Vagina (tissue), 2 donors: ENCODE measurements at regions of chr2 and their contacts with region 1.

Region 1: DNA sequence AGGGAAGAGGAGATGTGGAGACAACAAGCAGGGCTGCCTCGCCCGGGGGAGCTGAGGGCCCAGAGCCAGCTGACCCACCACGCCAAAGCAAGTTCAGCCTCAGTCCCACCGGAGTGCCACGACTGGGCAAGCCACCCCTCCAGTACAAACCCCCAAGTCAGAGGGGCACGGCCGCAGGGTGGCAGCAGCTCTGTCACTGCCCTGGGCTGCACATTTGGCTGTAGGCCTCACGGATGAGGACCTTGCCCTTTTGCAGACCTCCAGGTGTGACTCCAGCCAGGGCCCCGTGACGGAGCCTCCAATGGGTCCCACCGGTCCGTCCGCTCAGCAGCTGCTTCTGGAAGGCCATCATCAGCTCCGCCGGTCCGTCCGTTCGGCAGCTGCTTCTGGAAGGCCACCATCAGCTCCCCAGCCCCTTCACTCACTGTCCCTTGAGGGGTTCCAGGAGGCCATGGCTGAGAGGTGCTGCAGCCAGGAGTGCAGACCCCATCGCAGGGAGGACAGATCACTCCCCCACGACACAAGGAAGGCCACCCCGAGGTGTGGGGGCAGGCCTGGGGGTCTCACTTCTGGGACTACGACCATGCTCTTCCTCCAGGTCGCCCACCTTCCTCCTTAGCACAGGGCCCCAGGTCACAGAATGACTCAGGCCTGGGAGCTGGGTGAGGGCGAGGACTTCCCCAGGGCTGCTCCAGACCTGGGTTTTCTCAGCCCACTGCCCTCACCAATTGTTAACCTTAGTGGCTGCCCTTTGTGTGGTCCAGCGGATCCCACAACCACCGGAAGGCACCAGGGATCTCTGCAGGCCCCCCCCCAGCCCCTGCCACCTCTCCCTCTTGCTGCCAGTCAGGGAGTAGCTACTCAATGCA is 24.6 kb upstream of the STK25 start:
- DNase-seq: no peak
- H3K4me3 ChIP-seq: no peak overlapping the region
- H3K27ac ChIP-seq: no peak overlapping the region
- H3K4me1 ChIP-seq: no peaks in the 10 kb centered on the region
- H3K27me3 ChIP-seq: no peaks in the 10 kb centered on the region
- CTCF ChIP-seq: no peak
- POLR2A ChIP-seq: no peak

Region 2: DNA sequence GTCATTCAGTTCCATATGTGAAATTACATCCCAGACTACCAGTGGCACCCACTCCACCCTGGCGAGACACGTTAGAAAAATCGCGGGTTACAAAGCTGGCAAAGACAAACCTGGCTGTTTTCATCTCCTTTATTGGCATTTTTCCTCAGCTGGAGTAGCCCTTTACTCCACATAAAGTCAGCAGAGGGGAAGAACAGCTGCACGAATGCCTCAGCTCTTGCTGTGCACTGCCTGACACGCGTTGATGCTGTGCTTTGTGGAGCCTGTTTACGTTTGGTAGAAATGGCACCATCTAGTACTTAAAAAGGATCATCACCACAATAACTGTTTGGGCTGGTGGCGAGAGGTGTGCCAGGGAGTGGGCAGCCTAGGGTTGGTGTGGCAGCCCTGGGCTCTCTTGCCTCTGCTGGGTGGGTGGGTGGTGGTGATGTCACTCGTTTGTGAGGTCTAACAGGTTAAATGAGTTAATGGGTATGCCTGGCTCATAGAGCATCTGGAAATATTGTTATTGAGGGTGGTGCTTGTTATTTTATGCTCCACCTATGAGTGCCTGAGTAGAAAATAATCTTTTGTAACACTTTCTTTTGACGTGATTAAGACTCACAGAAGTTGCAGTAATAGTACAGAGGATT is 160.5 kb before region 1 on chr2:
- intact Hi-C with region 1: no loop called
- DNase-seq: no peak
- H3K4me3 ChIP-seq: no peak overlapping the region
- H3K27ac ChIP-seq: no peak overlapping the region
- H3K4me1 ChIP-seq: peaks cover 29% of the 10 kb centered on the region
- H3K27me3 ChIP-seq: no peaks in the 10 kb centered on the region
- CTCF ChIP-seq: no peak
- POLR2A ChIP-seq: no peak

Region 3: DNA sequence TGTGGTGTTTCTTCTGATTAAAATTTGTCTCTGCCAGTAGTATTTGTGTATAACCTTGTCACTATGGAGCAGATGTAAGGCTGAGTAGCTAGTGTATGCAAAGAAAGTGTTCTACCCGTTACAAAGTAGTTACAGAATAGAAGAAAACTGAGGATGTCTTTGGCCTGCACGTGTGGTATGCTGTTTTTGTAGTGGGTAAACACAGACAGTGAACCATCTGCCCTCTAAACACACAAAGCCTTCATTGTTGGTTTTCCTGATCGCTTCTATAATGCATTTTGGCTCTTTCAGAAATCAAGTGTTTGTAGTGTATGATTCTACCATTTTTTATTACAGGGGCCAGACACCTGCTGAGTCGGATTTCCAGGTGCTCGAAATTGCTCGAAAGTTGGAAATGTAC is 115.3 kb before region 1 on chr2:
- intact Hi-C with region 1: no loop called
- DNase-seq: no peak
- H3K4me3 ChIP-seq: no peak overlapping the region
- H3K27ac ChIP-seq: no peak overlapping the region
- H3K4me1 ChIP-seq: no peaks in the 10 kb centered on the region
- H3K27me3 ChIP-seq: no peaks in the 10 kb centered on the region
- CTCF ChIP-seq: no peak
- POLR2A ChIP-seq: no peak

Region 4: GRCh38 chr2:241584423-241584822 is 51.5 kb after region 1 on chr2:
- intact Hi-C with region 1: loop called (anchors 1 kb)
- DNase-seq: no peak
- H3K4me3 ChIP-seq: no peak overlapping the region
- H3K27ac ChIP-seq: no peak overlapping the region
- H3K4me1 ChIP-seq: no peaks in the 10 kb centered on the region
- H3K27me3 ChIP-seq: no peaks in the 10 kb centered on the region
- CTCF ChIP-seq: no peak
- POLR2A ChIP-seq: no peak